Left ventricle myocardium inferior (tissue), 1 donor: ENCODE measurements at regions of chr7 and their contacts with region 1.

Region 1: GRCh38 chr7:127708788-127709187 is 56.8 kb downstream of the SND1 start:
- DNase-seq: peak; percentile 26
- H3K4me3 ChIP-seq: no peak overlapping the region
- H3K27ac ChIP-seq: no peak overlapping the region
- H3K4me1 ChIP-seq: no peaks in the 10 kb centered on the region
- H3K27me3 ChIP-seq: no peaks in the 10 kb centered on the region
- CTCF ChIP-seq: peak; percentile 87

Region 2: DNA sequence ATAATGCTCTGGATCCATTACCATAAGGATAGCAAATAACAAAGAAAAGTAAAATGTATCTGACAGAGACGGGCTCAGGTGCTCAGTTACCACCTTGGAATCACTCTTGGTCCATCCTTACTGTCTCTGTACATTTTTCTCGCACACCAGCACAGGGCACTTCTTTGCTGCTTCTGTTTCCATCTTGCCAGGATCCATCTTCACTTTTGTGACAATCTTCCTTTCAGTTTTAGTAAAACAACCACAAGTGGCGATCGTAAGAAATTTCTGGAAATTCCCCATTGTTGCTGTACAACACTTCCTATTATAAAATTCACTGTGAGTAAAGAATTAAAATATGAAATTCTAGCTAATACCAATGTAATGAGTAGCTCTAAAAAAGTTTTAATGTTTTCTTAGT is 1151.5 kb before region 1 on chr7:
- intact Hi-C with region 1: no loop called
- DNase-seq: no peak
- H3K4me3 ChIP-seq: no peak overlapping the region
- H3K27ac ChIP-seq: no peak overlapping the region
- H3K4me1 ChIP-seq: no peaks in the 10 kb centered on the region
- H3K27me3 ChIP-seq: no peaks in the 10 kb centered on the region
- CTCF ChIP-seq: no peak

Region 3: DNA sequence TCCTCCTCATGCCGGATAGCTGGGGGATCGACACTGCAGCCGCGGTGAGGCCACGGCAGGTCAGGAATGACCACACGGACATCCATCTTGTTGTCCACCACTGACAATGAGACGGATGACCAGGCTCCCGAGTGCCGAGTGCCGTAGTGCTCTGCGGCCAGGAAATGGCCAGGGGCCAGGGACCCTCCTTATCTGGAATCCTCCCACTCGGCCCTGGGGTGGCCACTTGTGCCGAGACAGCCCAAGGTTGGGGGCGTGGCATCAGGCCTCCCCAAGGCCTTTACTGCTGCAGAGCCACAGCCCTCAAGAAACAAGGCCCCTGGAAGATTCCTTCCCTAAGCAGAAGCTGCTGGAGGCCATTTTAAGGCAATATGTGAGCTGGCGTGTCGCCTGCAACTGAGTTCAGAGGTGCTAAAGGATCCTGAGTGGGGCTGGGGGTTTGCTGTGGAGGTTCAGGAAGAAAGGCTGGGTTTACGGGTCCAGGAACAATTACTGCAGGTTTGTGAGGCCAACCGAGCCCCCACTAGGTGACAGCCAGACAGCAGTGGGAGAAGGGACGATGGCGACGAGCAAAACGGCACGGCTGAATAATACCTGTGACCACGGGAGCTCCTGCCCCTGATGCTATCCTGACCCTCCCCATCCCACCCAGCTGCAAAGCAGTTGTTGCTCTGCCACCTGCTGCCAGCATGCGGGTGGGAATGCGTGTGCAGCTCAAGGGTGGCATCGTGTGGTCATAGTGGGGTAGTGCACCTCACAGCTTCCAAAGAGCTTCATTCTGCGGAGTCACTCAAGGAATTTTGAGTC is 500.6 kb after region 1 on chr7:
- intact Hi-C with region 1: loop called (anchors 2 kb)
- DNase-seq: peak; percentile 44
- H3K4me3 ChIP-seq: no peak overlapping the region
- H3K27ac ChIP-seq: no peak overlapping the region
- H3K4me1 ChIP-seq: no peaks in the 10 kb centered on the region
- H3K27me3 ChIP-seq: peaks cover 97% of the 10 kb centered on the region
- CTCF ChIP-seq: peak; percentile 98